Heart left ventricle (tissue), 16 donors: ENCODE measurements at regions of chr3 and their contacts with region 1.

Region 1: GRCh38 chr3:158261371-158261979 is 151.6 kb downstream of the RSRC1 start:
- DNase-seq: no peak
- ATAC-seq: no peak
- H3K4me3 ChIP-seq: no peak overlapping the region
- H3K27ac ChIP-seq: no peak overlapping the region
- H3K4me1 ChIP-seq: no peaks in the 10 kb centered on the region
- H3K27me3 ChIP-seq: no peaks in the 10 kb centered on the region
- CTCF ChIP-seq: peak in 1 of 12 donors; percentile 6
- POLR2A ChIP-seq: no peak

Region 2: GRCh38 chr3:158152186-158152585 is 109.3 kb before region 1 on chr3:
- intact Hi-C with region 1: no loop called
- DNase-seq: peak in 1 of 5 donors; percentile 28
- ATAC-seq: peak; percentile 55 to 90 (median 68)
- H3K4me3 ChIP-seq: no peak overlapping the region
- H3K27ac ChIP-seq: no peak overlapping the region
- H3K4me1 ChIP-seq: peaks cover 0 to 8% (median 0%) of the 10 kb centered on the region in 12 donors
- H3K27me3 ChIP-seq: no peaks in the 10 kb centered on the region
- CTCF ChIP-seq: no peak
- POLR2A ChIP-seq: no peak

Region 3: GRCh38 chr3:158213459-158213858 is 48.0 kb before region 1 on chr3:
- intact Hi-C with region 1: no loop called
- DNase-seq: no peak
- ATAC-seq: no peak
- H3K4me3 ChIP-seq: no peak overlapping the region
- H3K27ac ChIP-seq: no peak overlapping the region
- H3K4me1 ChIP-seq: no peaks in the 10 kb centered on the region
- H3K27me3 ChIP-seq: no peaks in the 10 kb centered on the region
- CTCF ChIP-seq: no peak
- POLR2A ChIP-seq: no peak

Region 4: GRCh38 chr3:158233791-158234190 is 27.7 kb before region 1 on chr3:
- intact Hi-C with region 1: no loop called
- DNase-seq: no peak
- ATAC-seq: no peak
- H3K4me3 ChIP-seq: no peak overlapping the region
- H3K27ac ChIP-seq: no peak overlapping the region
- H3K4me1 ChIP-seq: no peaks in the 10 kb centered on the region
- H3K27me3 ChIP-seq: no peaks in the 10 kb centered on the region
- CTCF ChIP-seq: no peak
- POLR2A ChIP-seq: no peak

Region 5: DNA sequence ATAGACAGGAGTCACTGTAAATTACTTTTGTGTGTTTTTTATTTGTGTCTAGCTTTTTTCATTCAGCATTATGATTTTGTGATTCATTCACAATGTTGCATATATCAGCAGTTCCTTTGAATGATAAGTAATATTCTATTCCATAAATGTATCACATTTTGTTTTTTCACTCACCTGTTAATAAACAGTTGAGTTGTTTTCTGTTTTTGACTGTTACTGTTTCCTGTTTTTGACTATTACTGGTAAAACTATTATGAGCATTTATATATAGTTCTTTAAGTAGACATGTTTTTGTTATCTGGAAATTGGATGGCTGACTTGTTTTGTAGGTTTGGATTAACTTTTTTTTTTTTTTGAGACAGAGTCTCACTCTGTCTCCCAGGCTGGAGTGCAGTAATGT is 13.2 kb before region 1 on chr3:
- intact Hi-C with region 1: loop called in 1 of 10 experiments (anchors 2 kb)
- DNase-seq: no peak
- ATAC-seq: no peak
- H3K4me3 ChIP-seq: no peak overlapping the region
- H3K27ac ChIP-seq: no peak overlapping the region
- H3K4me1 ChIP-seq: peaks cover 0 to 5% (median 0%) of the 10 kb centered on the region in 12 donors
- H3K27me3 ChIP-seq: no peaks in the 10 kb centered on the region
- CTCF ChIP-seq: no peak
- POLR2A ChIP-seq: no peak

Region 6: GRCh38 chr3:158313338-158313927 is 52.0 kb after region 1 on chr3:
- intact Hi-C with region 1: no loop called
- DNase-seq: no peak
- ATAC-seq: no peak
- H3K4me3 ChIP-seq: no peak overlapping the region
- H3K27ac ChIP-seq: no peak overlapping the region
- H3K4me1 ChIP-seq: no peaks in the 10 kb centered on the region
- H3K27me3 ChIP-seq: no peaks in the 10 kb centered on the region
- CTCF ChIP-seq: peak in 7 of 12 donors; percentile 9 to 30 (median 13)
- POLR2A ChIP-seq: no peak